PC-3 (cell line): ENCODE measurements at regions of chr2 and their contacts with region 1.

Region 1: DNA sequence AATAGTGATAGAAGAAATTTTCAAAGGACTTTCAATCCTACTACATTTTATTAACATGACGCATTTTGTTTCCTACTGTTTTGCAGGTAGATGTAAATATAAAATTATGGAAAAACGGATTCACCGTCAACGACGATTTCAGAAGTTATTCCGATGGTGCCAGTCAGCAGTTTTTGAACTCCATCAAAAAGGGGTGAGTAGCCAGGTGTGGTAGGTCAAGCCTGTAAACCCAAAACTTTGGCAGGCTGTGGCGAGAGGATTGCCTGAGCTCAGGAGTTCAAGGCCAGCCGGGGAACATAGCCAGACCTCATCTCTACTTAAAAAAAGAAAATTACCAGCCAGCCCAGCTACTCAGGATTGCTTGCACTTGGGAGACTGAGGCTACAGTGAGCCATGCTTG is 33.0 kb upstream of the MFSD2B start:
- DNase-seq: no peak
- ATAC-seq: no peak
- H3K4me3 ChIP-seq: no peak overlapping the region
- H3K27ac ChIP-seq: no peak overlapping the region
- H3K4me1 ChIP-seq: no peaks in the 10 kb centered on the region
- H3K27me3 ChIP-seq: no peaks in the 10 kb centered on the region
- CTCF ChIP-seq: no peak

Region 2: GRCh38 chr2:24084386-24085361 is 107.8 kb after region 1 on chr2 and contains the start of gene TP53I3:
- CTCF ChIA-PET with region 1: no interaction called
- POLR2A ChIA-PET with region 1: no interaction called
- intact Hi-C with region 1: no loop called
- DNase-seq: peak; percentile 93
- ATAC-seq: peak; percentile 91
- H3K4me3 ChIP-seq: peak within 1 kb of the TSS; percentile 67
- H3K27ac ChIP-seq: peak within 1 kb of the TSS; percentile 36
- H3K4me1 ChIP-seq: peaks cover 14% of the 10 kb centered on the region
- H3K27me3 ChIP-seq: no peaks in the 10 kb centered on the region
- CTCF ChIP-seq: peak; percentile 88
- total RNA-seq, gene TP53I3: 37.0 and 42.4 TPM in 2 replicates

Region 3: GRCh38 chr2:24175631-24176187 is 198.8 kb after region 1 on chr2:
- CTCF ChIA-PET with region 1: no interaction called
- POLR2A ChIA-PET with region 1: no interaction called
- intact Hi-C with region 1: no loop called
- DNase-seq: no peak
- ATAC-seq: no peak
- H3K4me3 ChIP-seq: no peak overlapping the region
- H3K27ac ChIP-seq: no peak overlapping the region
- H3K4me1 ChIP-seq: no peaks in the 10 kb centered on the region
- H3K27me3 ChIP-seq: no peaks in the 10 kb centered on the region
- CTCF ChIP-seq: no peak

Region 4: GRCh38 chr2:24253303-24253919 is 276.5 kb after region 1 on chr2:
- CTCF ChIA-PET with region 1: interaction called, 11 read pairs
- POLR2A ChIA-PET with region 1: no interaction called
- intact Hi-C with region 1: no loop called
- DNase-seq: peak; percentile 50
- ATAC-seq: peak; percentile 40; the same call in 1 of the 2 replicates
- H3K4me3 ChIP-seq: no peak overlapping the region
- H3K27ac ChIP-seq: no peak overlapping the region
- H3K4me1 ChIP-seq: no peaks in the 10 kb centered on the region
- H3K27me3 ChIP-seq: no peaks in the 10 kb centered on the region
- CTCF ChIP-seq: no peak

Region 5: GRCh38 chr2:24382363-24383073 is 405.6 kb after region 1 on chr2:
- CTCF ChIA-PET with region 1: no interaction called
- POLR2A ChIA-PET with region 1: no interaction called
- intact Hi-C with region 1: no loop called
- DNase-seq: peak; percentile 78
- ATAC-seq: peak; percentile 97
- H3K4me3 ChIP-seq: no peak overlapping the region
- H3K27ac ChIP-seq: no peak overlapping the region
- H3K4me1 ChIP-seq: no peaks in the 10 kb centered on the region
- H3K27me3 ChIP-seq: no peaks in the 10 kb centered on the region
- CTCF ChIP-seq: peak; percentile 62